HCT116 (cell line): ENCODE measurements at regions of chr3 and their contacts with region 1.

Region 1: GRCh38 chr3:182618085-182618732 is 175.1 kb upstream of the ATP11B start:
- DNase-seq: no peak
- ATAC-seq: peak; percentile 74
- H3K4me3 ChIP-seq: no peak overlapping the region
- H3K27ac ChIP-seq: no peak overlapping the region
- H3K4me1 ChIP-seq: peaks cover 5 to 14% of the 10 kb centered on the region in 2 experiments
- H3K27me3 ChIP-seq: no peaks in the 10 kb centered on the region
- CTCF ChIP-seq: peak; percentile 71 to 84 (median 77)
- POLR2A ChIP-seq: no peak
- RAD21 ChIP-seq: peak; percentile 95

Region 2: GRCh38 chr3:181326637-181327223 is 1291.5 kb before region 1 on chr3:
- CTCF ChIA-PET with region 1: no interaction called
- POLR2A ChIA-PET with region 1: no interaction called
- RAD21 ChIA-PET with region 1: no interaction called
- intact Hi-C with region 1: loop called (anchors 5 kb)
- DNase-seq: peak; percentile 15
- ATAC-seq: peak; percentile 73; the same call in 1 of the 2 replicates
- H3K4me3 ChIP-seq: no peak overlapping the region
- H3K27ac ChIP-seq: no peak overlapping the region
- H3K4me1 ChIP-seq: no peaks in the 10 kb centered on the region
- H3K27me3 ChIP-seq: peaks cover 20% of the 10 kb centered on the region
- CTCF ChIP-seq: peak; percentile 34 to 75 (median 66); a peak in 5 of 6 replicates
- POLR2A ChIP-seq: no peak
- RAD21 ChIP-seq: peak; percentile 60

Region 3: DNA sequence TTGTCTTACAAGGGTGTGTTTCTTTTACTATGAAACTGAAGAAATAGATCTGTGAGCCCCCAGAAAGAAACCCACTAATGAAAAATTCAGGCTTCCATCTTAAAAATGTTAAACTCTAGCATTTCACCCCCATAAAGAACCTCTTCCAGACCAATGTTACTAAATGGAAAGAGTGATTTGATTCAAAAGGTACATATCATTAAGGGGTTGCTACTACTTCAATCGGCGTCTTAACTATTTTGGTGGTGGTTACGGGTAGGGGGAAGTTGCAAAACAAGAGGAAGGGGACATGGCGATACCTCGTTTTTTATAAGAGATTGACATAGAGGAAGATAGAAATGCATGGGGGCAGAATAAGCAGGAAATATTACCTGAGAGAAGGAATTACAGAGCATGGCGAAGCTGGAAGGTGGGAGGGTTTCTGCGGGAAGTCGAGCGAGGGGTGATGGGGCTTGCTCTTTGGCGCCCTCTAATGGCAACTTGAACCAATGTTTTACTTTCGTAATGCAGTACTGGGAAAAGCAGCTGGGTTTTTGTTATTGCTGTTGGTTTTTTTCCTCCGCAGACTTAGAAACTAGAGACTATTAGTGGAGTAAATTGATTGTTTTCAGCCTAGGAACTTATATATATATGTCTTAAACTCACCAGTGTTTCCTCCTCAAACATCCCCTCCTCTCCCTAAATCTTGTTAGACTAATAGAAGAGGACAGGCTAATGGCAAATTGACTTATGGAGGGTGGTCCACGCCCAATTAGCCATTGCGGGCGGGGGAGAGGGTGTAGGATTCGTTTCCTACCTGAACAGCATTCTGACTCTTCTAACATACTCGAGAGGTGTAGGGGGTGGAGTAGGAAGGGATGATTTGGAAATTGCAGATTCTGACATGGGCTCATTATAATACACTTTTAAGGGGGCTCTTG is 917.8 kb before region 1 on chr3:
- CTCF ChIA-PET with region 1: interaction called, 12 read pairs
- POLR2A ChIA-PET with region 1: no interaction called
- RAD21 ChIA-PET with region 1: interaction called in 1 of 2 experiments, 3 read pairs
- intact Hi-C with region 1: no loop called
- DNase-seq: peak; percentile 69
- ATAC-seq: peak; percentile 77
- H3K4me3 ChIP-seq: peak overlapping the region; percentile 30 to 51
- H3K27ac ChIP-seq: no peak overlapping the region
- H3K4me1 ChIP-seq: peaks cover 0 to 9% of the 10 kb centered on the region in 2 experiments; a peak in 2 of 4 replicates
- H3K27me3 ChIP-seq: no peaks in the 10 kb centered on the region; the same call in 1 of the 2 replicates
- CTCF ChIP-seq: peak; percentile 67 to 83 (median 81)
- POLR2A ChIP-seq: no peak
- RAD21 ChIP-seq: peak; percentile 70

Region 4: GRCh38 chr3:181948286-181948685 is 669.9 kb before region 1 on chr3:
- CTCF ChIA-PET with region 1: interaction called, 3 read pairs
- POLR2A ChIA-PET with region 1: interaction called, 3 read pairs
- RAD21 ChIA-PET with region 1: no interaction called
- intact Hi-C with region 1: loop called (anchors 1 kb)
- DNase-seq: no peak
- ATAC-seq: peak; percentile 72; the same call in 1 of the 2 replicates
- H3K4me3 ChIP-seq: no peak overlapping the region
- H3K27ac ChIP-seq: no peak overlapping the region
- H3K4me1 ChIP-seq: no peaks in the 10 kb centered on the region
- H3K27me3 ChIP-seq: no peaks in the 10 kb centered on the region
- CTCF ChIP-seq: peak; percentile 47 to 61 (median 53); a peak in 5 of 6 replicates
- POLR2A ChIP-seq: no peak
- RAD21 ChIP-seq: peak; percentile 73

Region 5: GRCh38 chr3:182364723-182365650 is 253.2 kb before region 1 on chr3:
- CTCF ChIA-PET with region 1: no interaction called
- POLR2A ChIA-PET with region 1: no interaction called
- RAD21 ChIA-PET with region 1: no interaction called
- intact Hi-C with region 1: loop called (anchors 2 kb)
- DNase-seq: peak; percentile 94
- ATAC-seq: peak; percentile 83
- H3K4me3 ChIP-seq: peak overlapping the region; percentile 13 to 56
- H3K27ac ChIP-seq: peak overlapping the region; percentile 91
- H3K4me1 ChIP-seq: peaks cover 23 to 29% of the 10 kb centered on the region in 2 experiments
- H3K27me3 ChIP-seq: no peaks in the 10 kb centered on the region
- CTCF ChIP-seq: no peak
- POLR2A ChIP-seq: no peak
- RAD21 ChIP-seq: peak; percentile 32; the same call in 1 of the 2 replicates

Region 6: DNA sequence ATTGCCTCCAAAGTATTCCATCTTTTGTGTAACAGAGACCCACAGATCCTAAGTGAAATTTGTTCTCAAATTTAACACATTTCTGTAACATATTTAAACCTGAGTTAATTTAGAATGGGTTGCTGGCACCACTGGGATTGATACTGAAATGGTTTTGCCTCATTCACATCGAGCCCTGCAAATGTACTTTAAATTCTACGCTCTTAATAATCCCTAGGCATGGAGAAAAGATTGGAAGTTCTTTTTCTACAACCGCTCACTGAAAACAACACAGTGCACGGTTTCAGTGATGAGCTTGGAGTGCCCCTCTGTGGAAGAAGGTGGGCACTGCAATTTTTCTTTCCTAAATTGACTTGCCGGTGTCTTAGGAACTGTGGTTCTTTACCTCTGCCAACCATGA is 65.2 kb after region 1 on chr3:
- CTCF ChIA-PET with region 1: interaction called, 14 read pairs
- POLR2A ChIA-PET with region 1: no interaction called
- RAD21 ChIA-PET with region 1: no interaction called
- intact Hi-C with region 1: loop called (anchors 1 kb)
- DNase-seq: peak; percentile 51
- ATAC-seq: peak; percentile 92
- H3K4me3 ChIP-seq: no peak overlapping the region
- H3K27ac ChIP-seq: no peak overlapping the region
- H3K4me1 ChIP-seq: no peaks in the 10 kb centered on the region
- H3K27me3 ChIP-seq: no peaks in the 10 kb centered on the region
- CTCF ChIP-seq: peak; percentile 81 to 98 (median 88)
- POLR2A ChIP-seq: no peak
- RAD21 ChIP-seq: peak; percentile 95

Region 7: GRCh38 chr3:182937293-182938051 is 319.3 kb after region 1 on chr3:
- CTCF ChIA-PET with region 1: no interaction called
- POLR2A ChIA-PET with region 1: no interaction called
- RAD21 ChIA-PET with region 1: no interaction called
- intact Hi-C with region 1: no loop called
- DNase-seq: no peak
- ATAC-seq: no peak
- H3K4me3 ChIP-seq: no peak overlapping the region
- H3K27ac ChIP-seq: no peak overlapping the region
- H3K4me1 ChIP-seq: no peaks in the 10 kb centered on the region
- H3K27me3 ChIP-seq: no peaks in the 10 kb centered on the region
- CTCF ChIP-seq: no peak
- POLR2A ChIP-seq: no peak
- RAD21 ChIP-seq: no peak